Spleen (tissue), 13 donors: ENCODE measurements at regions of chr1 and their contacts with region 1.

Region 1: GRCh38 chr1:118151312-118151937 is 33.6 kb downstream of the SPAG17 start:
- DNase-seq: no peak
- H3K4me3 ChIP-seq: no peak overlapping the region
- H3K27ac ChIP-seq: no peak overlapping the region
- H3K4me1 ChIP-seq: no peaks in the 10 kb centered on the region
- H3K27me3 ChIP-seq: no peaks in the 10 kb centered on the region
- CTCF ChIP-seq: peak in 10 of 11 experiments; percentile 18 to 72 (median 52)
- POLR2A ChIP-seq: no peak

Region 2: DNA sequence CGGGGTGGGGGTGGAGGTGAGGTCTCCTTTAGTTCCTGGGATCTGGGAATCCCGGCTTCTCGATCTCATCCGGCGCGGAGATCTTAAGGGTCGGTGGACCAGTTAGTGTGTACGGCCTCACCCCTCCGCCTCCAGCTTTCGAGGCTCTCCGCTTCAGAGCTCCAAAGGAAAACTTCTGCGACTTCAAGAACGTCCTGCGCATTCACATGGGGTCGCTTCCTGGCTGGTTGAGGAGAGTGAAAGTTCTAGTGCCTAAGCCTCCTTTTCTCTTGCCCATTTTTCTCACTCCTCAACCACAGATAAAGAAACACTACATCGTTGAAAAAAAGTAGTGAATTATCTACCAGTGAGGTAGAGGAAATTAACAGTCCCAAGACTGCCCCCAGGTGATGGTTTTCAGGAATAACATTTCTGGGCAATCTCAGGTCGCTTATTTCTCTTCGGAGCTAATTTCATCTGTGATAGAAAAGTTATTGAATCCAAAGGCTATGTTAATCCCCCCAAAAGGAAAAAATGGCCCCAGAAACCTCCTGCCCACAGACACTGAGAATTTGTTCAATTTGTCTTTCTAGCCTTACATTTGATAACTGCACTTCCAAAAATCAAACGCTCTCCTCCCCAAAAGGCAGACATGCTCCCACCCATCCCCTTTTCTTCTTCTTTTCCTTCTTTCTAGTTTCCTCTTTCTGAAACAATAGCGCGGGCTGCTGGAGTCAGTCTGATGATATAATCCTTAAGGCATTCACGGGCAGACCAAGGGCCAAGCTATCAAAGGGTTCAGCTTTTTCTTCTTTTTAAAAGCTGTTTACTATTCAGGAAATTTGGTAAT is 857.3 kb after region 1 on chr1:
- intact Hi-C with region 1: loop called (anchors 5 kb)
- DNase-seq: no peak
- H3K4me3 ChIP-seq: peak overlapping the region; percentile 6 to 54 (median 14)
- H3K27ac ChIP-seq: no peak overlapping the region
- H3K4me1 ChIP-seq: peaks cover 16 to 31% (median 26%) of the 10 kb centered on the region in 6 donors
- H3K27me3 ChIP-seq: peaks cover 8 to 80% (median 64%) of the 10 kb centered on the region in 7 donors
- CTCF ChIP-seq: peak in 10 of 11 experiments; percentile 12 to 69 (median 58)
- POLR2A ChIP-seq: no peak